Right ventricle myocardium inferior (tissue), 1 donor: ENCODE measurements at regions of chr10 and their contacts with region 1.

Region 1: DNA sequence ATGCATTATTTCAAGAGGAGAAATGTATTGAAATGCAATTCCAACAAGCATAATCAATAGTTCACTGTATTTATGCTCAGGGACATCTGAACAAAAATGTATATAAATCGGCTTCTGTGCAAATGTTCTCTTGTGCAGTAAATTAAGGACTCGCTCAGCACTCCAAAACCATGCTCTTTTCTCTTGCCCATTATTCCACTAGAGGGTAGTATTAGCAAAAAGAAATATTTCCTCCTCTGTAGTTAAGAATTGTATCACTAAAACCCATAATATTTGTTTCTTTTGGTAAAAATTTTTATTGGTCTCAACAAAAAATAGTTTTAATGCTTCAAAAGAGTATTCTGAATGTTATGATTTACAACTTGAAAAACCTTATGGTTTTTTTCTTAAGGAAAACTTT is 803.1 kb downstream of the PCDH15 start:
- DNase-seq: no peak
- ATAC-seq: no peak

Region 2: DNA sequence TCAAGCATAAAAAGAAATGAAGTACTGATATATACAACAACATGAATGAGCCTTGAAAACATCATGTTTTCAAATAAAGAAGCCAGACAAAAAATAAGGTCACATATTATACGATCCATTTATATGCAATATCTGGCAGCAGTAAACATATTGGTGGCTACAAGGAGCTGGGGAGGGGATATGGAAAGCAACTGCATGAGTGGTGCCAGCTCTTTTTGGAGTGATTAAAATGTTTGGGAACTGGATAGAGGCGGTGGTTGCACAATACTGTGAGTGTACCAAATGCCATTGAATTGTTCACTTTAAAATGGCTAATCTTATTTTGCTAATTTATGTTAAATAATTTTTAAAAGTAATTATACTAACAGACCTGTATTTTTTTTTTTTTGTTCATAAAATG is 321.4 kb after region 1 on chr10:
- intact Hi-C with region 1: no loop called
- DNase-seq: no peak
- ATAC-seq: no peak

Region 3: GRCh38 chr10:54342058-54342457 is 344.1 kb after region 1 on chr10:
- intact Hi-C with region 1: no loop called
- DNase-seq: no peak
- ATAC-seq: no peak

Region 4: DNA sequence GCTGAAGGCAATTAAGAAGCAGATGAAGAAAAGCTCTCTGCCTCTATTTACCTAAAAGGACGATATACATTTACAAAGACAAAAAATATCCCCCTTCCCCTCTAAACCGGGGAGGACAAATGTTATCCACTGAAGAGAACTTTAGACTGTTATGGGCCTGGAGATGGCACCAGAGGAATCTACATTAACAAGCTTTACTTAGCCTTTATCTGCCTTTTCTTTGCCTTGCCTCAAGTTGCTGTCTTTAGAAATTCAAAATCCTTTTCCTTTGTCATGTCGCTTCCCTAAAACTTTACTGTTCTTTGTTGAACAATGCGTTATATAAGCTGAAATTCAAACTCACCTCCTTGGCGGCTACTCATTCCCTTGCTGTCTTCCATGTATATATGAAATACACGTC is 398.1 kb after region 1 on chr10:
- intact Hi-C with region 1: loop called (anchors 10 kb)
- DNase-seq: no peak
- ATAC-seq: no peak